A549 (cell line): ENCODE measurements at regions of chr9 and their contacts with region 1.

Region 1: GRCh38 chr9:134670042-134670525 is 28.5 kb downstream of the COL5A1 start:
- DNase-seq: peak; percentile 63 to 79
- ATAC-seq: peak; percentile 76 to 81
- H3K4me3 ChIP-seq: no peak overlapping the region
- H3K27ac ChIP-seq: peak overlapping the region; percentile 81 to 89
- H3K4me1 ChIP-seq: peaks cover 42% of the 10 kb centered on the region
- CTCF ChIP-seq: no peak
- EP300 ChIP-seq: peak; percentile 69 to 78; a peak in 4 of 5 replicates
- POLR2A ChIP-seq: no peak
- RAD21 ChIP-seq: peak in 1 of 2 experiments; percentile 10; a peak in 1 of 5 replicates

Region 2: GRCh38 chr9:134681061-134681661 is 11.1 kb after region 1 on chr9:
- CTCF ChIA-PET with region 1: interaction called, 10 read pairs
- POLR2A ChIA-PET with region 1: no interaction called
- DNase-seq: no peak
- ATAC-seq: no peak; a peak in 1 of 6 replicates
- H3K4me3 ChIP-seq: no peak overlapping the region
- H3K27ac ChIP-seq: peak overlapping the region in 1 of 2 experiments; percentile 60; a peak in 2 of 6 replicates
- H3K4me1 ChIP-seq: peaks cover 18% of the 10 kb centered on the region
- CTCF ChIP-seq: no peak
- EP300 ChIP-seq: no peak
- POLR2A ChIP-seq: no peak
- RAD21 ChIP-seq: no peak

Region 3: GRCh38 chr9:134689321-134690181 is 19.5 kb after region 1 on chr9:
- CTCF ChIA-PET with region 1: interaction called, 18 read pairs
- POLR2A ChIA-PET with region 1: no interaction called
- DNase-seq: peak; percentile 59 to 82
- ATAC-seq: peak; percentile 89 to 98
- H3K4me3 ChIP-seq: no peak overlapping the region
- H3K27ac ChIP-seq: peak overlapping the region; percentile 17 to 64; a peak in 3 of 6 replicates
- H3K4me1 ChIP-seq: peaks cover 10% of the 10 kb centered on the region
- CTCF ChIP-seq: peak; percentile 59
- EP300 ChIP-seq: no peak
- POLR2A ChIP-seq: no peak
- RAD21 ChIP-seq: peak; percentile 42 to 44